Spleen (tissue), 13 donors: ENCODE measurements at regions of chr11 and their contacts with region 1.

Region 1: GRCh38 chr11:75867775-75868374 is 52.9 kb downstream of the UVRAG start:
- DNase-seq: no peak
- H3K4me3 ChIP-seq: no peak overlapping the region
- H3K27ac ChIP-seq: no peak overlapping the region
- H3K4me1 ChIP-seq: peaks cover 4 to 63% (median 32%) of the 10 kb centered on the region in 6 donors
- H3K27me3 ChIP-seq: no peaks in the 10 kb centered on the region
- CTCF ChIP-seq: peak; percentile 28 to 85 (median 72)
- POLR2A ChIP-seq: no peak

Region 2: GRCh38 chr11:75706260-75706729 is 161.6 kb before region 1 on chr11:
- intact Hi-C with region 1: loop called (anchors 10 kb)
- DNase-seq: peak; percentile 91
- H3K4me3 ChIP-seq: peak overlapping the region in 1 of 8 donors; percentile 17
- H3K27ac ChIP-seq: no peak overlapping the region
- H3K4me1 ChIP-seq: peaks cover 5 to 8% (median 6%) of the 10 kb centered on the region in 6 donors
- H3K27me3 ChIP-seq: no peaks in the 10 kb centered on the region
- CTCF ChIP-seq: peak; percentile 81 to 96 (median 93)
- POLR2A ChIP-seq: no peak

Region 3: DNA sequence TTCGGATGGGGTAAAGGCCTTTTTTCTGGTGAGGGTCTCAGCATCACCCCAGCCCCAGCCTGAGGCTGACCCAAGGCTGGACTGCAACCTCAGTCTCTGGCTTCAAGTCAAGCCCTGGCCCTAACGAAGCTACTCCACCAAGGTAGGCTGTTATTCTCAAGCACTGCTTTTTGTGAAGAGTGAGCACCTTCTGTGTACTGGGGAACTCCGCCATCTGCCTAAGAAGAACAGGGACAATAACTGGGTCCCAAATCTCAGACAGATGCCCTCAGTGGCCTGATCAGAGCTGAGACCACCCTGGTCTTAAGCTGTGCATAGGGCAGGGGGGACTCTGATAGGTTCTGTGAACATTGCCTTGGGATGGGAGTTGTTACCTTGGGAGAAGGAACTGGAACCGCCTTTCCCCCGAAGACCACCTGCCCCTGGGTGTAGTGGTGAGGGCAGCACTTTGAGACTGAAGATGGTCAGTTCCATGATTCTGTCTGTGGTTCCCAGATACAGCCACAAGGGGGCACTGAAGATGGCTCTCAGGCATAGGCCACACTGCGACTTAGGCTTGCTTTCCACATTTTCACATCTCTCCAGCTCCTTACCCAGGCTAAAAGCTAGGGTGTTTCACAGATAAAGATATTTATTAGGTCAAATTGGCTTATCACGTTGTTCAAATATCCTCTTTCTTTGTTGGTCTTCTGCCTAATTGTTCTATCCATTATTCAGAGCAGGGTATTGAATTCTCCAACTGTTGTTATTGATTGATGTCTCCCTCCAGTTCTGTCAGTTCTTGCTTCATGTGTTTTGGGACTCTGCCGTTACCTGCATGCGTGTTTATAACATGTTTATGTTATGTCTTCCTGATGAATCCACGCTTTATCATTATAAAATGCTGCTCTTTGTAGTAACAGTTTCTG is 64.7 kb before region 1 on chr11:
- intact Hi-C with region 1: loop called (anchors 2 kb)
- DNase-seq: peak; percentile 83
- H3K4me3 ChIP-seq: no peak overlapping the region
- H3K27ac ChIP-seq: peak overlapping the region in 1 of 8 donors; percentile 60
- H3K4me1 ChIP-seq: peaks cover 4 to 28% (median 18%) of the 10 kb centered on the region in 6 donors
- H3K27me3 ChIP-seq: no peaks in the 10 kb centered on the region
- CTCF ChIP-seq: peak; percentile 86 to 94 (median 91)
- POLR2A ChIP-seq: no peak

Region 4: GRCh38 chr11:76062733-76063132 is 194.9 kb after region 1 on chr11:
- intact Hi-C with region 1: no loop called
- DNase-seq: no peak
- H3K4me3 ChIP-seq: no peak overlapping the region
- H3K27ac ChIP-seq: no peak overlapping the region
- H3K4me1 ChIP-seq: no peaks in the 10 kb centered on the region
- H3K27me3 ChIP-seq: no peaks in the 10 kb centered on the region
- CTCF ChIP-seq: no peak
- POLR2A ChIP-seq: no peak